Posterior cingulate gyrus (tissue), 11 donors: ENCODE measurements at regions of chr3 and their contacts with region 1.

Region 1: DNA sequence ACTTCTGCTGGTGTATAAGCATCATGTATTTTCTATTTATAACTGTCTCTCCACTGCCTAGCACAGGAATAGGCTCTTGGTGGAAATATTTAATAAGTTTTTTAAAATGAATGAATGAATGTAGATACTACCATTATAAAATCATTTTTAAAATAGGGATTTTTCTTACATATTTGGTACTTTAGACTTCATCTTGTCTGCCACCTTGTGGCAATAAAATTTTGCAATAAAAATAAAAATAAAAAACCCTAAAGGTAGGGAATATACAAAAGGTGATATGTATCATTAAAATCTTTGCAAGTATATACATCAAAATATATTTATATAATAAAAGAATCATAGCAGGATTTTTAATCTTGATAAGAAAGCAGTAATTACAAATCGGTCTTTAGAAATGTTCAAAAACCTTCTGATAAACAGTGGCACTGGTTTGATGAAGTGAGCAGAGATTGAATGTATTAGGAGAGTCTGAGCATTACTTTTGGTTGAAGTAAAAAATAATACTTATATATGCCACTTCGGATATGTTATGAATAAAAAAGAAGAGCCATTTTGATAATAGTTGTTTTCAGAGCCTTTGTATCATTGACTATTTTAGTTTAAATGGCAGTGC is 95.2 kb downstream of the SPATA16 start:
- DNase-seq: no peak

Region 2: GRCh38 chr3:172808969-172809546 is 236.8 kb before region 1 on chr3:
- intact Hi-C with region 1: loop called (anchors 2 kb)
- DNase-seq: no peak

Region 3: GRCh38 chr3:172836390-172836997 is 209.4 kb before region 1 on chr3:
- intact Hi-C with region 1: loop called (anchors 1 kb)
- DNase-seq: peak in 1 of 10 donors; percentile 32